ENCODE measurements at regions of chr5 and their contacts with region 1.

Region 1: GRCh38 chr5:138035605-138036537 is 3.0 kb upstream of the FAM13B start:
- DNase-seq: peak; percentile 77
- H3K4me3 ChIP-seq: no peak overlapping the region
- H3K27ac ChIP-seq: no peak overlapping the region
- H3K4me1 ChIP-seq: peaks cover 10% of the 10 kb centered on the region
- H3K27me3 ChIP-seq: no peaks in the 10 kb centered on the region
- CTCF ChIP-seq: peak; percentile 83 to 88

Region 2: DNA sequence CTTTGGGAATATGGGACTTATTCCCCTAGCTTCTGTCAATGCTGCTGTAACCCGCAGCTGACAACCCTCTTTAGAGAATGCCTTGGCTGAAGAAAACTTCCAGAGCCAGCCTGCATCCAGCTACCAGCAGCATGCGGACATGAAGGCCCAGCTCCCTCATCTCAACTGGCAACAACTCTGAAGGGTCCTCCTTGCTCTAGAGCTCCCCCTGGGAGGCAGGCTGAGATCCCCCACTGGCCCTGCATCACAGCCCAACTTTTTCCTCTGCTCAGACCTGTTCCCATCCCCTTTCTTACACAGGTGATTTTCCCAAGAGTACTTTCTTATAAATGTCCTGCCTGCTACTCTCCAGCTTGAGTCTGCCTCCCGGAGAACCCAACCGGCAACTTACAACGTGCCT is 29.2 kb after region 1 on chr5:
- CTCF ChIA-PET with region 1: interaction called, 4 read pairs
- dilution Hi-C with region 1: no loop called
- in situ Hi-C with region 1: loop called in 1 of 2 experiments (anchors 5 kb)
- intact Hi-C with region 1: loop called (anchors 1 kb)
- DNase-seq: no peak
- H3K4me3 ChIP-seq: no peak overlapping the region
- H3K27ac ChIP-seq: no peak overlapping the region
- H3K4me1 ChIP-seq: no peaks in the 10 kb centered on the region
- H3K27me3 ChIP-seq: no peaks in the 10 kb centered on the region
- CTCF ChIP-seq: peak in 1 of 2 donors; percentile 28

Region 3: DNA sequence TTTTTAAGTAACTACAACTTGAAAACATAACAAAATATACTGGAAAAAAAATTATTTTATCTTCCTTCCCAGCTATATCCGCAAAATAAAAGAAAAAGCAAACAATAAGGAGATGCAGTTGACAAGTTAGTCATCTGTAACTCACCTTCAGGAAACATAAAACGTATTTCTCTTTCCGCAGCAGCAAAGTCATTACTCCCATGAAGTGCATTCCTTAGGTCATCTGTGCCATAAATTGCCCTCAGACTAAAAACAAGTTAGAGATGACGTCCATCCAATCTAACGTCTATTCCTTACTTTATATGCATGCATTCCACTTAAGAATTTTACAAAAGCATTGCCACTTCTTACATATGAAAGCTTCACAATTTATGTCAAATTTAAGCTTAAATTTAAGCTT is 92.5 kb after region 1 on chr5:
- CTCF ChIA-PET with region 1: interaction called, 5 read pairs
- dilution Hi-C with region 1: no loop called
- in situ Hi-C with region 1: loop called in 1 of 2 experiments (anchors 10 kb)
- intact Hi-C with region 1: loop called (anchors 1 kb)
- DNase-seq: no peak
- H3K4me3 ChIP-seq: no peak overlapping the region
- H3K27ac ChIP-seq: no peak overlapping the region
- H3K4me1 ChIP-seq: no peaks in the 10 kb centered on the region
- H3K27me3 ChIP-seq: no peaks in the 10 kb centered on the region
- CTCF ChIP-seq: no peak

Region 4: DNA sequence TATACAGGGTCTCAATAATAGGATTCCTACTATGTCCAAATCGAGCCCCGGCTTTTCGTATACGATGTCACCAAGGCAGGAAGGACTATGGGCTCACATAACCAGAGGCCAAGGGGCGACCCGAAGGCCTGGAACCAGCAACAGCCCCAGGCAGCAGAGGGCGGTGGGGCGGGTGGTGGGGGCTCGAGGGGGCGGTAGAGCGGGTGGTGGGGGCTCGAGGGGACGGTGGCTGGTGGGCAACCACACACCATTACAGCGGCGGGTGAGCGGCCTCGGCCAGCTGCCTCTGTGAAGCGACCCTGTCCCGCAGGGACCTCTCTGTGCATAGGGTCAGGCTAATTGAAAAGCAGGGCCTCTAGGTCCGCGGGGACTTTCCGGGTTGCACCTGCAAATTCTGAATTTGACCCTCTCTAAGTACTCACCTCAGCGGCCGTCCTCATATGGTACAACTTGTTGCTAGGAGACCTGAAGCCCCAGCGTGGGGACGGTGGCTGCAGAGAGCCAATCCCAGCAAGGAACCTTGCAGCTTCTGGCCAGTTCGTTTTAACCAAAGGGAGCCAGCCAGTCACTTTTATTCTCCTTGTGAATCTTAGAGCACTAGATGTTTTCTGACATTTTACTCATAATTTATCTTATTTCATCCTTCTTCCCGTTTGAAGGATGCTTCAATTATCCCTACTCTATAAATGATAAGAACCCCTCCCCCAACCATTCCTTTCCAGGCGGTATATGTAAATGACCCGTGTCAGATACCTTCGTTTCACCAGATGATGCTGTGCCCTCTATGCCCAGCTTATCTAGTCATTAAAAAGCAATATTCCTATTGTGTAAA is 103.3 kb after region 1 on chr5 and contains the start of gene NME5:
- CTCF ChIA-PET with region 1: interaction called, 3 read pairs
- dilution Hi-C with region 1: no loop called
- in situ Hi-C with region 1: loop called in 1 of 2 experiments (anchors 10 kb)
- intact Hi-C with region 1: no loop called
- DNase-seq: no peak
- H3K4me3 ChIP-seq: peak within 1 kb of the TSS; percentile 39 to 45 (median 45)
- H3K27ac ChIP-seq: no peak within 1 kb of the TSS
- H3K4me1 ChIP-seq: peaks cover 3% of the 10 kb centered on the region
- H3K27me3 ChIP-seq: no peaks in the 10 kb centered on the region
- CTCF ChIP-seq: no peak
- total RNA-seq, gene NME5: 1.6 to 5.5 TPM